Aorta (tissue), 5 donors: ENCODE measurements at regions of chr4 and their contacts with region 1.

Region 1: DNA sequence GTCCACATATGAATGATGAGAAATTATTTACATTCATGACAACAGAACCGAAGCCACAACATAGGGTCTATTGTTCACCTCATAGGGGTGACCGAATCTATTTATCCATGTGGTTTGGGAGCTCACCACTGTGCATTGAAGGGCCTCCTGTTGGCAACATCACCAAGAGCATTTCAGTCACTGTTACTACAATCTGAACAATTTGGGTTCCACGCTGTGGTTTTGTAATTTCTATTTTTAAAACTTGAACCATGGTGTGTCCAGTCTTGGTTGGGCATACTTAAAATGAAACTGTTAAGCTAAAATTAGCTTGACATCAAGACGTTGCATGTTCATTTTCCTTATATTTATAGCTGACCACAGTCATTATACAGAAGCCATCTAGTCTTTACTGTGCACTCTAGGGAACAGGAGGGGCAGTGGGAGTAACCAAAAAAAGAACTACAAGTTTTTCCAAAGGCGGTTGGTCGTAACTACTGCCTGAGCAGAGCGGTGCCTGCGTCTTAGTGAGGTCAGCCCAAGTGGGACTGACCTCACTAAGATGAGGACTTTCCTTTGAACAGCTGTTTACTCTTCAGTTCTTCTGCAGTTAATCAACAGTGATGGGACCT is 192.1 kb downstream of the SPRY1 start:
- DNase-seq: no peak
- ATAC-seq: peak; percentile 81
- H3K4me3 ChIP-seq: no peak overlapping the region
- H3K27ac ChIP-seq: peak overlapping the region; percentile 77 to 92
- H3K4me1 ChIP-seq: peaks cover 0 to 4% of the 10 kb centered on the region in 2 donors
- H3K27me3 ChIP-seq: no peaks in the 10 kb centered on the region

Region 2: DNA sequence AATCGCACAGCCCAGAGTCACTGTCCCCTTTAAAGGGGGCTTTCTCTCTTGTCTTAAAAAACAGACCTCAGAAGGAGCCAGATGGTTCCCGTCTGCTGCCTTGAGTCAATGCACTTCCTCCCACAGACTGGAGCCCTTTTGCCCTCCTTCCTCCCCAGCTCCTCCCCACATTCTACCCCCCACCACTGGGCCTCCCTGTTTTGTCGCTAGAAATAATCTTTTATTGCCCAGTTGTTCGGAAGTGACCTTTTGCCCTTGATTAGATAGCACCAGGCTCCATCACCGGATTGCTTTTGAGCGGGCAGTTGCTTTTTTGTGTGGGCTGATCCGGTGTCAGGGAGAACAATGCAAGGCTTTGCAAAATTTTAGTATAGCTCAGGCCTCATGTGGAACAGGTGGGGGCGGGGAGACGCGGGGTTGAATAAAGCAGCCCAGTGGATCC is 144.4 kb before region 1 on chr4:
- intact Hi-C with region 1: no loop called
- DNase-seq: peak in 1 of 2 donors; percentile 63
- ATAC-seq: peak; percentile 69
- H3K4me3 ChIP-seq: no peak overlapping the region
- H3K27ac ChIP-seq: no peak overlapping the region
- H3K4me1 ChIP-seq: no peaks in the 10 kb centered on the region
- H3K27me3 ChIP-seq: no peaks in the 10 kb centered on the region

Region 3: GRCh38 chr4:123649645-123650391 is 61.1 kb after region 1 on chr4:
- intact Hi-C with region 1: loop called in 1 of 2 experiments (anchors 5 kb)
- DNase-seq: no peak
- ATAC-seq: peak; percentile 75
- H3K4me3 ChIP-seq: peak overlapping the region in 1 of 2 donors; percentile 6
- H3K27ac ChIP-seq: peak overlapping the region; percentile 88 to 97
- H3K4me1 ChIP-seq: peaks cover 0 to 3% of the 10 kb centered on the region in 2 donors
- H3K27me3 ChIP-seq: no peaks in the 10 kb centered on the region

Region 4: DNA sequence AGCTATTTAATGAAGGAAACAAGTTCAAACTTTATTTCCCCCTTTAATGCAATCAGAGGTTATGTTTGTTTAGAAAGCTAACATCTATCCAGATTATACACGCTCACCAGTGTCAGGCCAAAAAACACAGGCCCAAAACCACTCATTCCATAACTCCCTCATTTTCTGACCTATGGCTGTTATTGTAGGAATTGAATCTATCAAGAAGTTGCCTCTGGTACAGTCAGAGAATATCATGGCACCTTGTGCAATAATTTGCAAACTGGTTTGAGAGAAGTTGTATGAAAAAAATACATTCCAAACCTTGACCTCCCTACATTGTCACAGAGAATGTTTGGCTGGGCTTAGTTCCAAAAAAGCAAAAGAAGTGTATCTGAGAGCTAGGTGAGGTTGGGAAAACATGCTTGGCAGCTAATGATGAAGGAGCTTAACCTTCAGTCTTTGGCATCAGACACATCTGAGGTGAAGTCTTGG is 532.8 kb after region 1 on chr4:
- intact Hi-C with region 1: no loop called
- DNase-seq: no peak
- ATAC-seq: no peak
- H3K4me3 ChIP-seq: no peak overlapping the region
- H3K27ac ChIP-seq: no peak overlapping the region
- H3K4me1 ChIP-seq: no peaks in the 10 kb centered on the region
- H3K27me3 ChIP-seq: no peaks in the 10 kb centered on the region

Region 5: DNA sequence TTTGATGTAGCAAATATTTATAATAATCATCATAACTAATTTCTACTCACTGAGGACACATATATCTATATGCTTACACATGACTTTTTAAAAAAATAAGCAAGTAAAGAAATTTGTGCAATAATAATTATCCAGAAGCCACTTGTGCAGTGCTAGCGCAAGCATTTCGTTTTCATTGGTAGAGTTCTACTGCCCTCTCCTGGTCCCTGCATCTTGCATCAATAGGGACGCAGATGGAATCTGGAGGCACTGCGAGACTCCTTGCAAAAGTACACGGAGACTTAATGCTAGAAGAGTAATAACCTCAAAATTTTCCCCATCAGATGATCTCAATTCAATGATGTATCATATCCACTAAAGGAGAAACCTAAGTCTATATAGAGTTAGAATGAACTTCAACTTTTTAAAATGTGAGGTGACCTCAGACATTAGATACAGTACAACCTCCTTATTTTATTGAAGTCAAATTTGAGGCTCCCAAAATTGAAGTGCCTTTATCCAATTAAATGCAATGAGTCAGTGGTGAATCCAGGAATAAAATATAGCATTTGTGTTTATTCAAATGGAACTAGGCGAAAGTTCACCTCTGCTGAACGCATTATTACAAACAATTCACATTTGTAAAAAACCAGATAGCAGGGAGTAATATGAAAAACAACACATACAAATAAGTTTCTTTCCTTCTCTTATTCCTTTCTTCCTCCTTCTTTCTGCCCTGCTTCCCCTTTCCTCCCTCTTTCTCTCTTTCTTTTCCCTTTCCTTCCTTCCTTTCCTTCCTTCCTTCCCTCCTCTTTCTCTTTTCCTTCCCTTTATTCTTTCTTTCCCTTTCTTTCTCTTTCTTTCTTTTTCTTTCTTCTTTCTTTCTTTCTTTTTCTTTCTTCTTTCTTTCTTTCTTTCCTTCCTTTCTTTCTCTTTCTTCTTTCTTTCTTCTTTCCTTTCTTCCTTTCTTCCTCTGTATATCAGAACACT is 673.8 kb after region 1 on chr4:
- intact Hi-C with region 1: no loop called
- DNase-seq: peak in 1 of 2 donors; percentile 61
- ATAC-seq: peak; percentile 89
- H3K4me3 ChIP-seq: no peak overlapping the region
- H3K27ac ChIP-seq: no peak overlapping the region
- H3K4me1 ChIP-seq: no peaks in the 10 kb centered on the region
- H3K27me3 ChIP-seq: no peaks in the 10 kb centered on the region